A549 (cell line): ENCODE measurements at regions of chr10 and their contacts with region 1.

Region 1: GRCh38 chr10:77004917-77005564 is 632.6 kb downstream of the KCNMA1 start:
- DNase-seq: peak; percentile 53 to 57
- ATAC-seq: peak; percentile 66 to 86; a peak in 5 of 6 replicates
- H3K4me3 ChIP-seq: no peak overlapping the region
- H3K27ac ChIP-seq: no peak overlapping the region
- H3K4me1 ChIP-seq: no peaks in the 10 kb centered on the region
- CTCF ChIP-seq: peak; percentile 60
- EP300 ChIP-seq: no peak
- POLR2A ChIP-seq: no peak
- RAD21 ChIP-seq: peak; percentile 60 to 70

Region 2: DNA sequence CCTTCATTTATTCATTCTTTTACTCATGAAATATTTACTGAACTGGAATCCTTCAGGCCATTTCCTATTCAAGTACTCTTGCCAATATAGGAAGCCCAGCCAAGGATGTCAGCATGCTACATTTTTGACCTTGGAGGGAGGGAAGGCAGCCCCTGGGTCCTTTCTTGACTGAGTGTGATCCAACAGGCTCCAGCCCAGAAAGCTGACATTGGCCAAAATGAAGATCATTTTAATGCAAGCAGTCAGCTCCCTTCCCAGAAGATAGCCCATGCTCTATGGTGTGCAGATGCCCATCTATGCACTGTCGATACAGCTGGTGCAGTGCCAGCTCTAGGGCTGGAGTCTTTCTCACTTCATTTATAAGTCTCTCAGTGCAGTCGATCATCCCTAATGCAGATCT is 13.4 kb before region 1 on chr10:
- CTCF ChIA-PET with region 1: interaction called, 23 read pairs
- POLR2A ChIA-PET with region 1: no interaction called
- DNase-seq: no peak
- ATAC-seq: no peak
- H3K4me3 ChIP-seq: no peak overlapping the region
- H3K27ac ChIP-seq: no peak overlapping the region
- H3K4me1 ChIP-seq: no peaks in the 10 kb centered on the region
- CTCF ChIP-seq: no peak
- EP300 ChIP-seq: no peak
- POLR2A ChIP-seq: no peak
- RAD21 ChIP-seq: no peak